ENCODE measurements at regions of chr17 and their contacts with region 1.

Region 1: GRCh38 chr17:16297367-16298139 is 55.7 kb downstream of the CENPV start:
- DNase-seq: peak; percentile 86
- ATAC-seq: peak; percentile 77
- H3K4me3 ChIP-seq: peak overlapping the region in 2 of 3 experiments; percentile 17 to 42; a peak in 4 of 6 replicates
- H3K27ac ChIP-seq: peak overlapping the region; percentile 97
- H3K4me1 ChIP-seq: peaks cover 78% of the 10 kb centered on the region
- H3K27me3 ChIP-seq: no peaks in the 10 kb centered on the region
- CTCF ChIP-seq: peak; percentile 33; the same call in 1 of the 2 replicates
- EP300 ChIP-seq: peak in 1 of 2 experiments; percentile 38; a peak in 1 of 4 replicates
- POLR2A ChIP-seq: peak; percentile 24 to 75; a peak in 3 of 4 replicates
- RAD21 ChIP-seq: no peak

Region 2: DNA sequence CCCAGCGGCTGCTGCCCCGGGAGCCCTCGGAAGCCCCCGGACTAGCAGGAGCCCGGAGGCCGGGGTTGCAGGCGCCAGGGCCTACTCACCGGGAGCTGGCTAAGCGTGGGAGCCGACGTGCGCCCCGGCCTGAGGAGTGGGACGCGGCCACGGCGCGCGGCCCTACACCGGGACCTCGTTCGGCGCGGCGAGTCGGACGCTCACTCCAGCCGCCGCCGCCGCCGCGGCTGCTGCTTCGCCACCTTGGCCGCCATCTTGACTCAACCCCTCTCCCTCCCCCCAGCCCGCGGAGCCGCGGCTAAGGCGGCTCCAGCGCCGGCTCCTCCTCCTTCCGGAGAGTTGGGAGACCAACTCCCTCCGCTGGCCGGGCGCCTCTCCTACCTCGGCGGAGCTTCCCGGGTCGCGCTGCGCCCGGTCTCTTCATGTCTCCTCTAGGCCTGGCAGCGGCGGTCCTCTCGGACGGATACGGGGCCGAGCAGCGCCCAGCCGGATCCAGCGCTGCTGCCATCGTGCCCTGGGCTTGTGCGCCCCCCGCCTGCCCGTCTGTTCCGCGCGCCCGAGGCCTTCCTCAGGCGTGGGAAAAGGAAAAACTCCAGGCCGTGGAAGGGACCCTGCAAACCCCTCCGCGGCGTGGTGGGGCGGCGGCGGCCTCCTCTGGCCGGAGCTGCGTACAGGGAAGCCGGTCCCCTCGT is 82.1 kb before region 1 on chr17 and contains the start of gene NCOR1:
- CTCF ChIA-PET with region 1: no interaction called
- POLR2A ChIA-PET with region 1: interaction called, 37 read pairs
- in situ Hi-C with region 1: no loop called
- intact Hi-C with region 1: no loop called
- DNase-seq: peak; percentile 85
- ATAC-seq: peak; percentile 90
- H3K4me3 ChIP-seq: peak within 1 kb of the TSS; percentile 84 to 91 (median 88)
- H3K27ac ChIP-seq: peak within 1 kb of the TSS; percentile 99
- H3K4me1 ChIP-seq: peaks cover 43% of the 10 kb centered on the region
- H3K27me3 ChIP-seq: no peaks in the 10 kb centered on the region; a peak in 1 of 5 replicates
- CTCF ChIP-seq: peak; percentile 63
- EP300 ChIP-seq: 0 out of 4 replicates have a peak, but pooled peaks of 1 of the 2 experiments have one; percentile 10
- POLR2A ChIP-seq: peak; percentile 91 to 93
- RAD21 ChIP-seq: peak; percentile 60; the same call in 1 of the 2 replicates
- total RNA-seq, gene NCOR1: 57.0 and 80.4 TPM in 2 replicates

Region 3: DNA sequence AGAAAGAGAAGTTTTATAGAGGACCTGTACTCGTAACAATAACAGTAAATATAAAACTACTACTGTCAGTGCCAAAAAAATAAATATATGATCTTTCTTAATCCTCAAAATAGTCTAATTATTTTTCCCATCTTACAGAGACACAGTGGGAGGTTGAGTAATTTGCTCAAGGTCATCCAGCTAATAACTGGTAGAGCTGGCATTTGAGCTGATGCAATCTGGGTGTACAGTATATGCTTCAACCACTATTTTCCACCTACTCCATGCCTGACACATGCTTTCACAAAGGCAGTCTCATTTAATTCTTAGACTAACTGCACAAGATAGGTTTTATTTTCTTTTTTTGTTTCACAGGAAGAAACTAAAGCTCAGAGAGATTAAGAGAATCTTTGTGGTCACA is 46.9 kb before region 1 on chr17:
- CTCF ChIA-PET with region 1: no interaction called
- POLR2A ChIA-PET with region 1: interaction called, 13 read pairs
- in situ Hi-C with region 1: no loop called
- intact Hi-C with region 1: no loop called
- DNase-seq: peak; percentile 70
- ATAC-seq: peak; percentile 62
- H3K4me3 ChIP-seq: no peak overlapping the region
- H3K27ac ChIP-seq: peak overlapping the region; percentile 69
- H3K4me1 ChIP-seq: peaks cover 87% of the 10 kb centered on the region
- H3K27me3 ChIP-seq: no peaks in the 10 kb centered on the region
- CTCF ChIP-seq: no peak
- EP300 ChIP-seq: no peak; a peak in 1 of 4 replicates
- POLR2A ChIP-seq: no peak
- RAD21 ChIP-seq: no peak

Region 4: DNA sequence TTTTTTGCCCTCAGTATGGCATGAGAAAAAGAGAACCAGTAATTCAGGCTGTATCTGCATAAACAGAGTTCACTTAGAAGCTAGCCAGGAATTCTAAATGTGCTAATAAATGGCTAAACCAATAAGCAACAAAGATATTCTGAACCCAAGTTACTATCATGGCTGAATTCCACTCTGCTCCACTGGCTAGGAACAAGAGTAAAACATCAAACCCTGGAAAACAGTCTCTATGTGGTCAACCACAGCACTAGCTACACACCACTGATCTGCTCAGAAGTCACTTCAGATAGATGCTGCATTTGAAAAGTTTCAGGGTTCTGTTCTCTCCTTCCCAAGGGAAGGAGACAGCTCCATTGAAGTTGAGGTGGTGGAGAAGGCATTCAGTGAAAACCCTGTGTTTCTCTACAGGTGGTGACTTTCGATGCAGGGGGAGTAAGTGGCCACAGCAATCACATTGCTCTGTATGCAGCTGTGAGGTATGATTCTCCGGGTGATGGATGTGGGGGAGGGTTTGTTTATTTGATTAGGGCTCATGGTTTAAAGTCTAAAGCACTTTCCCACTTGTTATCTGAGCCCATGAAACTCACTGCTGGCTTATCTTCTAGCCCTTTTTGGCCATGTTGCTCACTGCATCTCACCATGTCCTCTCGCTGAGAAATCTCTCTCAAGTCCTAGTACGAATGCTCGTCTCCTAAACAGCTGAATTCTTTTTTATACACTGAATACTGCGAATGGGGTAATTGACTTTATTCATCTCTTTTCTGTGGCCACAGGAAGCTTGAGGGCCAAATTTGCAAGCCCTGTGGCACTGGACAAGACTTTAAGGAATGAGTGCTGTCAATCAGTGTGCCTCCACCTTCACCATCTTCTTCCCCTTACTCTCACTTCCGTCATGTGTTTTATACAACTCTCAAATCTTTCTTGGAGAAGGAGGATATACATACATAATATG is 15.9 kb after region 1 on chr17:
- CTCF ChIA-PET with region 1: no interaction called
- POLR2A ChIA-PET with region 1: interaction called, 100 read pairs
- in situ Hi-C with region 1: no loop called
- intact Hi-C with region 1: no loop called
- DNase-seq: peak; percentile 94
- ATAC-seq: peak; percentile 97
- H3K4me3 ChIP-seq: peak overlapping the region in 2 of 3 experiments; percentile 1 to 35; a peak in 2 of 6 replicates
- H3K27ac ChIP-seq: peak overlapping the region; percentile 97
- H3K4me1 ChIP-seq: peaks cover 55% of the 10 kb centered on the region
- H3K27me3 ChIP-seq: no peaks in the 10 kb centered on the region
- CTCF ChIP-seq: peak; percentile 11; the same call in 1 of the 2 replicates
- EP300 ChIP-seq: peak in 1 of 2 experiments; percentile 76; a peak in 3 of 4 replicates
- POLR2A ChIP-seq: peak; percentile 44 to 55; a peak in 2 of 4 replicates
- RAD21 ChIP-seq: 0 out of 2 replicates have a peak, but pooled peaks have one; percentile 41

Region 5: DNA sequence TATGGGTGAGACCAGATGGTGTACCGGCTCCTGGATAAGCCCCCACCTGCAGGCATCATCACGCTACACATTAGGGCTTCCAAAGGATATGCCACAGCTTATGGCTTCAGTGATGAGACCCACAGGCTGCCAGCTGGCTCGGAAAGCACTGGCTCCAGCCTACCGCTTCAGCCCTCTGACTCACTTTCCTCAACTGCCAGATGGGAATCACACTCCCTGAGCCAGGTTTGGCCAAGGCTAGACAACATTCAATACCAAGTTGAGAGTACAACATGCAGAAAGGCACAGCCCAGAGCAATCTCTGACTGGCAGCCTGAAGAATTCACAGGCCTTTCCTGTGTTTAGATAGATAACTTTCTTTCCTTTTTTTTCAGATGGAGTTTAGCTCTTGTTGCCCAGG is 45.4 kb after region 1 on chr17:
- CTCF ChIA-PET with region 1: no interaction called
- POLR2A ChIA-PET with region 1: interaction called, 12 read pairs
- in situ Hi-C with region 1: no loop called
- intact Hi-C with region 1: no loop called
- DNase-seq: no peak
- ATAC-seq: peak; percentile 10; the same call in 2 of the 3 replicates
- H3K4me3 ChIP-seq: no peak overlapping the region
- H3K27ac ChIP-seq: no peak overlapping the region
- H3K4me1 ChIP-seq: no peaks in the 10 kb centered on the region
- H3K27me3 ChIP-seq: no peaks in the 10 kb centered on the region
- CTCF ChIP-seq: no peak
- EP300 ChIP-seq: no peak
- POLR2A ChIP-seq: peak in 1 of 2 experiments; percentile 37; a peak in 1 of 4 replicates
- RAD21 ChIP-seq: no peak

Region 6: DNA sequence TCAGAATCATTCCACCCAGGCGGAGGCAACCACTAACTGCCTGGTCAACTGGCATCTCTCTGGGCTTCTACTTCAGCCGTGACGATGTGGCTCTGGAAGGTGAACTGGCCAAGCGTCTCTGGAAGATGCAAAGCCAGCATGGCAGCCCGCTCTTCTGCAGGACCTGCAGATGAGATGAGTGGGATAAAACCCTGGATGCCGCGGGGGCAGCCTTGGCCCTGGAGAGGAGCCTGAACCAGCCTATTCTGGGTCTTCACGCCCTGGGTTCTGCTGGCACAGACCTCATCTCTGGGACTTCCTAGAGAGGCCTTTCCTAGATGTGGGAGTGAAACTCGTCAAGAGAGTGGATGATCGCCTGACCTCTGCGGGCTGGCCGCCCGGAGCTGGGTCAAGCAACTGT is 93.9 kb after region 1 on chr17:
- CTCF ChIA-PET with region 1: no interaction called
- POLR2A ChIA-PET with region 1: no interaction called
- in situ Hi-C with region 1: no loop called
- intact Hi-C with region 1: no loop called
- DNase-seq: no peak
- ATAC-seq: no peak
- H3K4me3 ChIP-seq: no peak overlapping the region
- H3K27ac ChIP-seq: no peak overlapping the region
- H3K4me1 ChIP-seq: peaks cover 15% of the 10 kb centered on the region
- H3K27me3 ChIP-seq: no peaks in the 10 kb centered on the region
- CTCF ChIP-seq: no peak
- EP300 ChIP-seq: no peak
- POLR2A ChIP-seq: no peak
- RAD21 ChIP-seq: no peak

Region 7: DNA sequence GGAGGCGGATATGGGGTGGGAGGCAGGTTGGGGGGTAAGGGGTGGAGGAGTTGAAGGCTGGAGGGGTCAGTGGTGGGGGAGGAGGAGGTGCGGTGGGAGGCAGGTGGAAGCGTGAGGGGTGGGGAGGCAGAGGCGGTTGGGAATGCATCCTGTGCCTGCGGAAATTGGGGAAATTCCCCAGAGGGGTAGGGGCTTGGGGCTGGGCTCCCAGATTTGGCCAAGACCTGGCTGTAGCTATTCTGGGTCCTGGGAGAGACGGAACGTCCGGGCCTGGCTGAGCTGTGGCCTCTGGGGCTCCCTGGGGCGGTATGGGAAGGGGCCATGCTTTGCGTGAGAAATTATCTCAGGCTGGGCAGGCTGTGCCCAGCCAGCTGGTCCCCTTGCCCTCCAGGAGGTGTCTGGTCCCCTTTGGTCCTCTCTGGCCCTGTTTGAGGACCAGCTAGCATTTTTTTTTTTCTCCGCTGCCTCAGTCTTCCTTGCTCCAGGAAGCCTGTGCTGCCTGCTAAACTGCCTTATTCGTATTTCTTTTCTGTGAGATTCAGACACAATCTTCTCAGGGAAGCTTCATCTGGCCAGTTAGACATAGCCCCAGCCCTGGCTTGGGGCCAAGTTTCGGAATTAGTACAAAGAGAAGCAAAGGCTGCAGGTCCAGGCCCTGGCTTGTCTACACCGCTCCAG is 110.5 kb after region 1 on chr17:
- CTCF ChIA-PET with region 1: no interaction called
- POLR2A ChIA-PET with region 1: no interaction called
- in situ Hi-C with region 1: no loop called
- intact Hi-C with region 1: no loop called
- DNase-seq: peak; percentile 51
- ATAC-seq: peak; percentile 82
- H3K4me3 ChIP-seq: peak overlapping the region; percentile 19 to 58 (median 36); a peak in 5 of 6 replicates
- H3K27ac ChIP-seq: peak overlapping the region; percentile 12
- H3K4me1 ChIP-seq: peaks cover 25% of the 10 kb centered on the region
- H3K27me3 ChIP-seq: no peaks in the 10 kb centered on the region
- CTCF ChIP-seq: no peak
- EP300 ChIP-seq: no peak
- POLR2A ChIP-seq: no peak
- RAD21 ChIP-seq: no peak